ENCODE measurements at regions of chr1 and their contacts with region 1.

Region 1: GRCh38 chr1:26321315-26322041 is 3.7 kb downstream of the CD52 start:
- DNase-seq: peak in 1 of 2 donors; percentile 90
- H3K4me3 ChIP-seq: no peak overlapping the region
- H3K27ac ChIP-seq: no peak overlapping the region
- H3K4me1 ChIP-seq: peaks cover 8% of the 10 kb centered on the region
- H3K27me3 ChIP-seq: no peaks in the 10 kb centered on the region
- CTCF ChIP-seq: peak; percentile 77 to 90 (median 80)
- POLR2A ChIP-seq: no peak

Region 2: GRCh38 chr1:26225033-26225831 is 96.2 kb before region 1 on chr1:
- intact Hi-C with region 1: no loop called
- DNase-seq: no peak
- H3K4me3 ChIP-seq: peak overlapping the region; percentile 40 to 42
- H3K27ac ChIP-seq: no peak overlapping the region
- H3K4me1 ChIP-seq: peaks cover 15% of the 10 kb centered on the region
- H3K27me3 ChIP-seq: no peaks in the 10 kb centered on the region
- CTCF ChIP-seq: no peak
- POLR2A ChIP-seq: no peak

Region 3: DNA sequence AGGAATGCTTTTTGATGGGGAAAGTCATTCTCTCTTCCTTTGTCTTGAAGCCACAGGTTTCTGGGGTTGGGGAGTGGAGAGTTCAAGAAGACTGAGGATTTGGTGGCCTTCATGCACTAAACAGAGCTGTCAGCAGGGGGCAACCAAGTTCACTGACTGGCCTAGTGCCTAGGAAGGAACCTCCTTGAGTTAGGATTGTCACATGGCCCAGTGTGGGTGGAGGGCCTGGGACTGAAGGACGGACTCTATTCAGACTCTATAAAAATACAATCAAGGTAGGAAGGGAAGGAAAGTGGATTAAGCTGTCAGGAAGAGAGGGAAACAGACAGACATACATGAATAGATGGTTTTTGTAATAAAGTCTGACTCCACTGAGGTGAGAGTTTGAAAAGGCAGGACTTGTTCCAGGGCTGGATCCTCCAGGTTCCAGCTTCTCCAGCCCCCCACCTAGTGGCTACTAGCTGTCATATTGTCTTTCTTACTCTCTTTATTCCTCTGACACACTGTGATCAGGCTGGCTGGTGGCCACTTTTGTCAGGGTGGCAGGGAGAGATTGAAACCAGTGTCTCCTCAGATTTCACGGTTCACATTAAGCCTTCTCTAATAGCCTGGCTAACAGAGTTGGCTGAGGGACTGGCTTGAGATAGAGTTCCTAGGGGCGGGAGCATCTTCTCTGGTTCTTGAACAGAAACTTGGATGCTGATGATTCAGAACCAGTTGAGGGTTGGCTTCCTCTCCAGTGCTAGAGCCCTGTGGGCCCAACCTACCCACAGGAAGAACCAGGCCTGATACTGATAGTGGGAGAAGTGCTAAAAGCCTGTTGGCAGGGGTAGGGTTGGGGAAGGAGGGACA is 45.7 kb before region 1 on chr1:
- intact Hi-C with region 1: loop called (anchors 2 kb)
- DNase-seq: no peak
- H3K4me3 ChIP-seq: no peak overlapping the region
- H3K27ac ChIP-seq: peak overlapping the region; percentile 95
- H3K4me1 ChIP-seq: peaks cover 57% of the 10 kb centered on the region
- H3K27me3 ChIP-seq: no peaks in the 10 kb centered on the region
- CTCF ChIP-seq: peak; percentile 74 to 95 (median 88)
- POLR2A ChIP-seq: no peak

Region 4: GRCh38 chr1:26284597-26285360 is 36.7 kb before region 1 on chr1:
- intact Hi-C with region 1: loop called (anchors 5 kb)
- DNase-seq: peak in 1 of 2 donors; percentile 96
- H3K4me3 ChIP-seq: no peak overlapping the region
- H3K27ac ChIP-seq: peak overlapping the region; percentile 53
- H3K4me1 ChIP-seq: peaks cover 86% of the 10 kb centered on the region
- H3K27me3 ChIP-seq: no peaks in the 10 kb centered on the region
- CTCF ChIP-seq: peak in 2 of 3 experiments; percentile 47 to 48
- POLR2A ChIP-seq: no peak

Measured in vagina (tissue), 2 donors.